Heart right ventricle (tissue), 16 donors: ENCODE measurements at regions of chr6 and their contacts with region 1.

Region 1: GRCh38 chr6:169969372-169970099 is 218.1 kb downstream of the ERMARD start:
- DNase-seq: peak in 1 of 2 donors; percentile 9
- ATAC-seq: no peak
- H3K4me3 ChIP-seq: no peak overlapping the region
- H3K27ac ChIP-seq: no peak overlapping the region
- H3K4me1 ChIP-seq: no peaks in the 10 kb centered on the region
- H3K27me3 ChIP-seq: no peaks in the 10 kb centered on the region
- CTCF ChIP-seq: no peak

Region 2: GRCh38 chr6:170522565-170523183 is 553.1 kb after region 1 on chr6:
- intact Hi-C with region 1: loop called in 6 of 10 experiments (anchors 5 to 10 kb)
- DNase-seq: no peak
- ATAC-seq: peak; percentile 43 to 70 (median 63)
- H3K4me3 ChIP-seq: no peak overlapping the region
- H3K27ac ChIP-seq: peak overlapping the region; percentile 42 to 84 (median 76)
- H3K4me1 ChIP-seq: peaks cover 5 to 34% (median 25%) of the 10 kb centered on the region in 9 donors
- H3K27me3 ChIP-seq: no peaks in the 10 kb centered on the region
- CTCF ChIP-seq: peak in 6 of 9 donors; percentile 8 to 42 (median 30)